T-cell (primary cell): ENCODE measurements at regions of chr14 and their contacts with region 1.

Region 1: DNA sequence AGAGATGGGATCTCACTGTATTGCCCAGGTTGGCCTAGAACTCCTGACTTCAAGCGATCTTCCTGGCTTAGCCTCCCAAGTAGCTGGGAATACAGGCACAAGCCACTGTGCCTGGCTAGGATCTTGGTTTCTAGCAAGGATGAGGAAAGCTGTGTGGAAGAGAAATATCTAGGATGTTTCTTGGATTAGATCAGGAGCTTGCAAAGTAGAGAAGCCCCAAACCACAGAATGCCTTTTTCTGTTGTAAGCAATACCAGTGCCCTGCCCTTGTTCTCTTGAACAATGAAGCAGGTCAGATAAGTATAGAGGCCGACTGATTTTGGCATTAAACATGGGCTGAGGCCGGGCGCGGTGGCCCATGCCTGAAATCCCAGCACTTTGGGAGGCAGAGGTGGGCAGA is 44.3 kb upstream of the STRN3 start:
- DNase-seq: no peak
- ATAC-seq: no peak
- H3K4me3 ChIP-seq: no peak overlapping the region
- H3K4me3 Mint-ChIP-seq: no peak overlapping the region
- H3K27ac ChIP-seq: no peak overlapping the region
- H3K27ac Mint-ChIP-seq: no peak overlapping the region
- H3K4me1 ChIP-seq: no peaks in the 10 kb centered on the region
- H3K4me1 Mint-ChIP-seq: no peaks in the 10 kb centered on the region
- H3K27me3 ChIP-seq: no peaks in the 10 kb centered on the region
- H3K27me3 Mint-ChIP-seq: no peaks in the 10 kb centered on the region

Region 2: DNA sequence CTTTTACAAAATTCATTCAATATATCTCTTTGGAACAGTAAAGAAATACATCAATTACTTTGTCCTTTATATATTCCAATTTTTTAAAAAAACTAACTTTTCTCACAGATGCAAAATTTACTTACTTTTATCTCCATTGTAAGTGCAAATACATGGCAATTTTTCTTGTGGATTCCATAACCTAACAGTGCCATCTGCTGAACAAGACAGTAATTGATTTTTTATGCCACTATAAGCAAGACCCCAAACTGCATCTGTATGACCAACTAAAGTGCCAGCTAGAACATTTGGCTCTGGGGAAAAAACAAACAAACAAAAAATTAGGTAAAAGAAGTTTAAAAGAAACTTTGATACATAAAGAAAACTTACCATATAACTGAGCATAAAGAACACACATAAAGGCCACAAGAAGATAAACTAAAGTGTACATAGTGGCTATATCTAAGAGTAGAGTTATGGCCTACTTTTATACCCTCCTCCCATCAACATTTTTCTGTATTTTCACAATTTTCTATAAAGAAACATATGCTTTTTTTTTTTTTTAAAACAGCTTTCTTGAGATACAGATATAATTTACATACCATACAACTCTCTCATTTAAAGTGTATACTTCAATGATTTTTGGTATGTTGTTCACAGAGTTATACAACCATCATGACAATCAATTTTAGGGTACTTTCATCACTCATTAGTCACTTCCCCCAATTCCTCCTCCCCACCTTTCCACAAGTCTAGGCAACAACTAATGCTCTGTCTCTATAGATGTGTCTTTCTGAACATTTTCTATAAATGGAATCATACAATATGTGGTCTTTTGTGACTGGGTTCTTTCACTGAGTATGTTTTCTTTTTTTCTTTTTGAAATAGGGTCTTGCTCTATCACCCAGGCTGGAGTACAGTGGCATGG is 163.4 kb before region 1 on chr14:
- CTCF ChIA-PET with region 1: interaction called in 1 of 2 experiments, 12 read pairs
- POLR2A ChIA-PET with region 1: no interaction called
- DNase-seq: peak in 1 of 35 experiments; percentile 24
- ATAC-seq: no peak
- H3K4me3 ChIP-seq: no peak overlapping the region
- H3K4me3 Mint-ChIP-seq: no peak overlapping the region
- H3K27ac ChIP-seq: no peak overlapping the region
- H3K27ac Mint-ChIP-seq: no peak overlapping the region
- H3K4me1 ChIP-seq: no peaks in the 10 kb centered on the region
- H3K4me1 Mint-ChIP-seq: peaks cover 0 to 1% (median 0%) of the 10 kb centered on the region in 3 donors
- H3K27me3 ChIP-seq: no peaks in the 10 kb centered on the region
- H3K27me3 Mint-ChIP-seq: no peaks in the 10 kb centered on the region